ENCODE measurements at regions of chr17 and their contacts with region 1.

Region 1: DNA sequence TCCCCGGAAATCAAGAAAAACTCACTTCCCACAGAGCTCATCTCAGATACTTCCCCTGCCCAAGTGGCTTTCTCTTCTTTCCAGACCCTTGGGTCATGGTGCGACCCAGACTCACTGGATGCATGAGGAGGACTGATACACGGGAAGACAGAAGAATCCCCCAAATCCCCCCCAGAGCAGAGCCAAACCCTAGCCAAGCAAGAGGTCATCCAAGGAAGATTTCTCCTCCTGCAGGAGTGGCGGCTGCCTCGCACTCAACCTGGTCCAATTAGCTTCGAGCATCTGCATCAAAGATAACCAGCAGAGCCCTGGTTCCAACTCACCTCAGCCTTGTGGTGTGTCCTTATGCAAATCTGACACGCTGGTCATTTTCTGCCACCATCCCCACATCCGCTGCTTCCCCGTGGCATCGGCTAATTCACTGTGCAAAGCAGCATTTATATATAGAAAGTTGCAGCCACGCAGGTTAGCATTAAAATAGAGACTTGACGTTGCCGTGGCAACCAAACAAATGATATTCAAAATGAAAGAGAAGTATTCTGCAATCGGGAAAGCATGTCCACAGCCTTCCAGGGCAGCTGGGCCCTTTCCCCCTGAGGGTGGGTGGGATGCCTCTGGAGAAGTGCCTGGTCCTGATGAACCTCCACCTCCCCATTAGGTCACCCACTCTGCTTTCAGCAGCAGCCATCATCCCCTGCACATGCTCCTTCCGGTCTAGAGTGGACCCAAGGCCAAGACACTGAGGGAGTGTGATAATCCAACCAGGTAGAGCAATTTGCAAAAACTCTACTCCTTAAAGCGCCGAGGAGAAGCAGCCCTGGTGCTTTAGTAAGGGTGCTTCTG is 138.8 kb downstream of the GAS7 start:
- DNase-seq: peak; percentile 37 to 76
- ATAC-seq: peak in 1 of 4 donors; percentile 71
- H3K4me3 ChIP-seq: no peak overlapping the region
- H3K27ac ChIP-seq: no peak overlapping the region
- H3K4me1 ChIP-seq: no peaks in the 10 kb centered on the region
- H3K27me3 ChIP-seq: no peaks in the 10 kb centered on the region
- CTCF ChIP-seq: no peak

Region 2: DNA sequence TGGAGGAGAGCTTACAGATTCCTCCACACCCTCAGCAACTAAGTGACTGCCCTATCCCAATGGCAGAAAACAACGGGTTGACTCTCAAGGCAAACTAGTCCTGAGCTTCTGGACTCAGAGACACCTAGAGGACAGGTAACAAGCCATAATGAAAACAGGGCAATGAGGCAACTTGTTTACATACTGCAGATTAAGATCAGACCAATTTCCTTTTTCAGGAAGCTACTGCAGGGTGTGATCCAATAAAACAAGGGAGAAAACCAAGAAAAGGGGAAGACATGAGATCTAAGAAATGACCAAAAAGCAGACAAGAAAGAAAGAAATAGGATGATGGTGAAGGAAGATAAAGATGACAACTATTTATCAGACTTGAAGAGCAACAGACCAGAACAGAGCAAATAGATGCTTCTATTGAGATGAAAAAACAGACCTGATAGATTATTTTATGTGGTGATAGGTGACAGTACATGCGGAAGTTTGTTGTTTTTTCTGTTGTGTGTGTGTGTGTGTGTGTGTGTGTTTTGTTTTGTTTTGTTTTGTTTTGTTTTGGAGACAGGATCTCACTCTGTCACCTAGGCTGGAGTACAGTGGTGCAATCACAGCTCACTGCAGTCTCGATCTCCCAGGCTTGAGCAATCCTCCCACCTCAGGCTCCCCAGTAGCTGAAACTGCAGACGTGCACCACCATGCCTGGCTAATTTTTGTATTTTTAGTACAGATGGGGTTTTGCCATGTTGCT is 18.1 kb after region 1 on chr17:
- intact Hi-C with region 1: loop called in 1 of 2 experiments (anchors 2 kb)
- DNase-seq: no peak
- ATAC-seq: no peak
- H3K4me3 ChIP-seq: no peak overlapping the region
- H3K27ac ChIP-seq: no peak overlapping the region
- H3K4me1 ChIP-seq: no peaks in the 10 kb centered on the region
- H3K27me3 ChIP-seq: no peaks in the 10 kb centered on the region
- CTCF ChIP-seq: no peak